Activated CD4-positive, alpha-beta memory T cell treated with anti-CD3 and anti-CD28 coated beads for 36 hours (primary cell): ENCODE measurements at regions of chr12 and their contacts with region 1.

Region 1: DNA sequence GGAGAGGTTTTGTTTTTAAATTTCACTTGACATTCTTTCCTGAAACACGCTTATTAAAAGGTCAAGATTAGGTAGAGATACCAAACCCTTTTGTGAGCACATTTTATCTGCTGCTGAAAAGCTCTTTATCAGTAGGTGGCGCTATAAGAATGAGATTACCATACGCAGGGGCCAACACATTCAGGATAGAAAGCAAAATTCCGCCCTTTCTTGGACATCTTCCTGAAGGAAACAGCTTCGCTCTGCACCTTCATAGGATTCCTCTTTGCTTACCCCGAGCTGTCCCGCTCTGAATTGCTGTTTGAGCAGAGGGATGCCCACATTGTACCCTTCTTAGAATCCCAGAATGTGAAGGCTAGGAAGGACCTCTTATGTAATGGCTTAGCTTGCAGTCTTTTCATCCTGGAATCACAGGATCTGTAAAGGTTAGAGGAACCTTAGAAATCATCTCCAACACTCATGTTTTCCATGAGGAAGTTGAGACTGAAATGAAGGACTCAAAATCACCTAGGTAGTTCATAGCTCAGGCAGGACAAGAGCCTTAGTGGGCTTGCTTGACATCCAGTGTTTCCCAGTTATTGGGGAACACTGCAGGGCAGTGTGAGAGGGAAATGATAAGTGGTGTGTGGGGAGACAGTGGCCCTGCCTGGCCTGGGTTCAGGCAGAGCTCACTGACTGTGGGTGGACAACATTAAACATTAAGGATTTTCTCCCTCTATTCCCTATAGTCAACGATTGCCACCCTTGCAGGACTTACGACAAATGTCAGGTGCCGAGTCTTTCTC is 38.7 kb upstream of the CRY1 start:
- DNase-seq: peak; percentile 11
- H3K4me3 Mint-ChIP-seq: no peak overlapping the region
- H3K27ac Mint-ChIP-seq: no peak overlapping the region
- H3K4me1 Mint-ChIP-seq: no peaks in the 10 kb centered on the region
- H3K27me3 Mint-ChIP-seq: no peaks in the 10 kb centered on the region

Region 2: DNA sequence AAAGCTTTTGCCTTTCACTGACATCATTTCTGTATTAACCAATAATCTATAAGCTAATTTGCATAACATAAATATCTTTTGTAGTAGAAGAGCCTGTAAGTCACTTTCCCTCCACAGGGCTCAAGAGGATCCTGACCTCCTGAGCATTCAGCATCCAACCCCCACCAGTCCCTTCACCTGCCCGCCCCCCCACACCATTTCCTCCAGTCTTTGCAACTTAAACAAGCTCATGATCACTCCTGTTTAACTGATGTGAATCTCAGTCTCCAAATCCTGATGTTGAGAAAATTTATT is 26.7 kb before region 1 on chr12:
- CTCF ChIA-PET with region 1: interaction called, 12 read pairs
- POLR2A ChIA-PET with region 1: no interaction called
- intact Hi-C with region 1: no loop called
- DNase-seq: no peak
- H3K4me3 Mint-ChIP-seq: no peak overlapping the region
- H3K27ac Mint-ChIP-seq: no peak overlapping the region
- H3K4me1 Mint-ChIP-seq: peaks cover 8% of the 10 kb centered on the region
- H3K27me3 Mint-ChIP-seq: peaks cover 1% of the 10 kb centered on the region

Region 3: DNA sequence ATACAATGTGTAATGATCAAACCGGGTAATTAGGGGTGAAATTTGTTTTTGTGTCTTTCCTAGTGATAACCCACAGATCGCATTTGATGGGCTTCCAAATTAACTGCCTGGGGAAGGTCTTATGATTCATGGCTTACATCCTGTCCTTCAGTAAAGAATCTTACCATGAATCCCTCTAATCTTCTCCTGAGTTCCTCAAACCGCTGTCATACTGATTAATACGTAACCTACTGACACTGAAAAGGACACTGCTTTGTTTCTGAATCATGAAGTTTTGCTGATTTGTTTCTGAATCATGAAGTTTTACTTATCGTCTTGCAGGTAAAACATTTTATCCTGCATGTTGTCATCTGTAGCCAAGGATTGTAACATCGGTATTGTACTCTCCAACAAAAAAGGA is 13.4 kb after region 1 on chr12:
- CTCF ChIA-PET with region 1: interaction called, 31 read pairs
- POLR2A ChIA-PET with region 1: no interaction called
- intact Hi-C with region 1: no loop called
- DNase-seq: no peak
- H3K4me3 Mint-ChIP-seq: no peak overlapping the region
- H3K27ac Mint-ChIP-seq: no peak overlapping the region
- H3K4me1 Mint-ChIP-seq: no peaks in the 10 kb centered on the region
- H3K27me3 Mint-ChIP-seq: no peaks in the 10 kb centered on the region

Region 4: DNA sequence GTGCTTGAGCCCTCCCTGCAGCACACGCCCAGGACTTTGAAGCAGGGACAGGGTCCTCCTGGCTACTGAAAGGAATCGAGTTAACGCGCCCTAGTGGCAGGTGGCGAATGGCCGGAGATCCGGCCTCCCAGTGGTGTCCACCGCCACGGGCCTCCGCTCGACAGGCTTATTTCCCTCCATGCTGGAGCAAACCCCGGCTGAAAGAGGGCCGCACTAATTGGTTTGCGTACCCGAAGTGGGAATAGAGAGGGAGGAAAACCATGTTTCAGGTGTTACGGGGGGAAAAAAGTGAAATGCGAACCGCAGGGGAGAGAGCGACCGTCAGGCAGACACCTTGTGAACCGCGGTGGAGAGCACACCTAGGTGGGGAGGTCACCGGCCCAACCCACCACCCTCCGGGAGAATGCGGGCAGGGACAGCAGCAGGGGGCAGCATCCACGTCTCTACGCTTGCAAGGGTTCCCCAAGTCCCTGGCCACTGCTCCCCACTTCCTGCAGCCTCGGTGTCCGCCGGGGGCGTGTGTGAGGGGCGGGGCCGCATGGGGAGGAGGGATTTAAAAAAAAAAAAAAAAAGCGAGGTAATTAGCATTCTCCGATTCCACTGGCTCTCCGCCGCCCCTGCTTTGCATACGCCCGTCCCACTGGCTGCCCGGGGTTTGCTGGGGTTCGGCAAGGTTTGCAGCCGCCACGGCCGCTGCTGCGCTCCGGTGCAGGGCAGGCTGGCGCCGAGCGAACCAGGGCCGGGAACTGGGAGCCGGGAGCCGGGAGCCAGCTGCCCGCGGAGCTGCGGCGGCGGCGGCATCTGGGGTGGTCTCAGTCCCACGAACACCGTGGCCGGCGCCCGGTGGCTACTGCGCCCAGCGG is 186.0 kb after region 1 on chr12:
- CTCF ChIA-PET with region 1: interaction called, 8 read pairs
- POLR2A ChIA-PET with region 1: no interaction called
- intact Hi-C with region 1: loop called (anchors 5 kb)
- DNase-seq: peak; percentile 93
- H3K4me3 Mint-ChIP-seq: peak overlapping the region; percentile 82
- H3K27ac Mint-ChIP-seq: no peak overlapping the region
- H3K4me1 Mint-ChIP-seq: peaks cover 26% of the 10 kb centered on the region
- H3K27me3 Mint-ChIP-seq: peaks cover 8% of the 10 kb centered on the region

Region 5: DNA sequence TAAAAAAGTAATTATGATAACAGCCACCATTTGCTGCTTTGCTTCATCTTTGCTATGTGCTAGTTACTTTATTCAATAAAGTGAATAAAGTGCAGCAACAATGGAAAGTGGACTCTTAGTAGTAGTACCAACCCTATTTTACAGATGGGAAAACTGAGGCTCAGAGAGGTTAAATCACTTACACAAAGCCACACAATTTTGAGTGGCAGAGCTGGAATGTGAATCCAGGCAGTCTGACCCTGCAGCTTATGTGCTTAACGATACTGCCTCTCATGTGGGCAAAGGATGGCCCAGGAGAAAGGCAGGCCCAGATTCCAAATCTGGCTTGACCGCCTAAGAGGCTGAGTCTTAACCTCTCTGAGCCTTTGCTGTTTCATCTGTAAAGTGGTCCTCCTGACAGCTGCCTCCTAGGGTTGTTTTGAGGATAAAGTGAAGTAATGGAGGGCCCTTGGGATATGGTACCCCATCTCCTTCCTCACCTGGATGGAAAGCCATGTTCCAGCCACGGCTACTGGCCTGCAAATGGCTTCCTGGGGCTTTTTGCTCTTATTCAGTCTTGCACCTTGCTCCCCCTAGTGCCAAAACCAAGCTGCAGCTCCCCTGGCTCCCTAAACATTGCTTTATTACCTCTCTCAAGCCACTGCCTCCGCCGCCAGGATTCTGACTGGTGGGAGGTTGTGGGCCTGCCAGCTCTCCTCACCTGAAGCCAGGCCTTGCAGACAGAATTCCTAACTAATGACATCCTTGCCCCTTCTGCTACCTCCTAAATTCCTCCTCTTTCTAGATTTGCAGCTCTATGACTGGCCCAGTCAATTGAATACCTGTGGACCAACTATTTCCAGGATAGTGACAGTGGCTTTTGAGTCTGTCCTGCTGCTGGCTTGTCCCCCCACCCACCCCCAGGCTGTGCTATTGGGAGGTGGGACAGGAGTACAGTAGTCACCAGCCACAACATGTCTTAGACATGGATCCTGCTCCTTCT is 270.3 kb after region 1 on chr12:
- CTCF ChIA-PET with region 1: interaction called, 182 read pairs
- POLR2A ChIA-PET with region 1: no interaction called
- intact Hi-C with region 1: loop called (anchors 1 kb)
- DNase-seq: peak; percentile 77
- H3K4me3 Mint-ChIP-seq: no peak overlapping the region
- H3K27ac Mint-ChIP-seq: no peak overlapping the region
- H3K4me1 Mint-ChIP-seq: peaks cover 6% of the 10 kb centered on the region
- H3K27me3 Mint-ChIP-seq: no peaks in the 10 kb centered on the region

Region 6: DNA sequence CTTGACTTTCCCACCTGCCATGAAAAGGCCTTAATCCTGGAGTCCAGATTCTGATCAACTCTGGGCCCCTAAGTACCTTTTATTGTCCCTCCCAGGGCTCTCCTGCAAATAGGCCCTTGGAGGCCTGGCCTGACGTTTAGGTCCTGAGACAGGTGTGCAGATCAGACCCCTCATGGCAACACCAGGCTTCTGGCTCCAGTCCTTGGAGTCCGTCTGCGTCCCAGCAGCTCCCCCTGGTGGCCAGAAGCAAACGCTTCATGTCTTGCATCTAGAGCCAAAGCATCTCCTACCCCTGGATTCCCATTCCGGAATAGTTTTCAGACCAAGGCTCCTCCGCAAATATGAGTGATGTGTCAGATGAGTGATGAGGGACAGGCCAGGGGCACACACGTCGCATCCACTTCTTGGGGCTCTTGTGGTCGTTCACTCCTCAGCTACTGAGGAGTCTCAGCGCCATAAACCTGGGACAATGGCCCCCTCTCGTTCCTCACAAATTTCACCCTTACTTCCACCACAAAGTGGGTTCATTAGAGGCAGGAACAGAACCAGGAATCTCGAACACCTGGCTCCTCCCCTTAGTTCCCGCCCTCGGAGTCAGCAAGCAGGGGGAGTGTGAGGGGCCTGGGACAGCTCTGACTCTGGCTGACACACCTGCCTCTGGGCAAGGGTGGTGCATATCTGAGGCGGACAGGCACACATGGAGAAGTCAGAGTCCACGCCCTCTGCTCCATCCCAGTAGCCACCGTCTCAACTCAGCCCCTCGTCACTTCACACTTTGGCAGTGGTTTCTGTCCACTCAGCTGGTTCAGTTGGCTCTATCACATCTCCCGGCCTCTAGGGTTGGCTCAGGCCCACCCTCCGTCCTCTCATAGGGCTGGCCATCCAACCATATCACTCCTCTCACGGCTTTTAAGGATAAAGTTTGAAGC is 475.7 kb after region 1 on chr12:
- CTCF ChIA-PET with region 1: interaction called, 341 read pairs
- POLR2A ChIA-PET with region 1: no interaction called
- intact Hi-C with region 1: loop called (anchors 1 kb)
- DNase-seq: peak; percentile 84
- H3K4me3 Mint-ChIP-seq: no peak overlapping the region
- H3K27ac Mint-ChIP-seq: no peak overlapping the region
- H3K4me1 Mint-ChIP-seq: no peaks in the 10 kb centered on the region
- H3K27me3 Mint-ChIP-seq: no peaks in the 10 kb centered on the region